AG04450 (cell line): ENCODE measurements at regions of chr6 and their contacts with region 1.

Region 1: GRCh38 chr6:43150051-43150751 is 20.9 kb upstream of the SRF start:
- DNase-seq: no peak
- H3K4me3 ChIP-seq: no peak overlapping the region
- H3K27ac ChIP-seq: peak overlapping the region; percentile 11
- H3K27me3 ChIP-seq: no peaks in the 10 kb centered on the region
- CTCF ChIP-seq: no peak

Region 2: GRCh38 chr6:43070028-43070632 is 80.1 kb before region 1 on chr6:
- CTCF ChIA-PET with region 1: interaction called, 13 read pairs
- POLR2A ChIA-PET with region 1: interaction called, 3 read pairs
- DNase-seq: no peak
- H3K4me3 ChIP-seq: no peak overlapping the region
- H3K27ac ChIP-seq: no peak overlapping the region
- H3K27me3 ChIP-seq: no peaks in the 10 kb centered on the region
- CTCF ChIP-seq: peak; percentile 73